A549 (cell line): ENCODE measurements at regions of chr2 and their contacts with region 1.

Region 1: GRCh38 chr2:217886720-217887309 is 116.0 kb downstream of the TNS1 start:
- DNase-seq: peak; percentile 76 to 81
- ATAC-seq: peak; percentile 80 to 89
- H3K4me3 ChIP-seq: no peak overlapping the region
- H3K27ac ChIP-seq: no peak overlapping the region
- H3K4me1 ChIP-seq: peaks cover 7% of the 10 kb centered on the region; the same call in 2 of the 3 replicates
- CTCF ChIP-seq: peak; percentile 77
- EP300 ChIP-seq: no peak
- POLR2A ChIP-seq: no peak
- RAD21 ChIP-seq: peak; percentile 71 to 81

Region 2: GRCh38 chr2:217585362-217585761 is 301.5 kb before region 1 on chr2:
- CTCF ChIA-PET with region 1: no interaction called
- POLR2A ChIA-PET with region 1: no interaction called
- DNase-seq: no peak
- ATAC-seq: no peak
- H3K4me3 ChIP-seq: no peak overlapping the region
- H3K27ac ChIP-seq: no peak overlapping the region
- H3K4me1 ChIP-seq: no peaks in the 10 kb centered on the region
- CTCF ChIP-seq: no peak
- EP300 ChIP-seq: no peak
- POLR2A ChIP-seq: no peak
- RAD21 ChIP-seq: no peak

Region 3: DNA sequence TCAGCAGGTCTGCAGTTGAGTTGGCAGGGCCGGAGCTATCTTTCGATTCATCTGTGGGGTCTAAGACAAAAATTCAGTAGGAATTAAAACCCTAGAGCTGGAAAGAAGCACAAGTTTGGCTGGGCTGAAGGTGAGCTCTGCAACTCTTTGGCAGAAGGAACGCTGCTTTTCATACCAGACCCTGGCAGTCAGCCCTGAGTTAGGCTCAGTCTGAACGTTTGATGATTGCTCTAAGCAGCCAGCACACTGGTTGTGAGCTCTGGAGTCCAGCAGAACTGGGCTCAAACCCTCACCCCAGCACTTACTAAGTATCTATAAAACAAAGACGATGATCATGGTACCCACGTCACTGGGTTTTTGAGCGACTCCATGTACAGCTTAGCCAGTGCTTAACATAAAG is 76.6 kb before region 1 on chr2:
- CTCF ChIA-PET with region 1: interaction called, 10 read pairs
- POLR2A ChIA-PET with region 1: no interaction called
- DNase-seq: no peak
- ATAC-seq: no peak
- H3K4me3 ChIP-seq: no peak overlapping the region
- H3K27ac ChIP-seq: no peak overlapping the region
- H3K4me1 ChIP-seq: no peaks in the 10 kb centered on the region
- CTCF ChIP-seq: no peak
- EP300 ChIP-seq: no peak
- POLR2A ChIP-seq: no peak
- RAD21 ChIP-seq: no peak

Region 4: DNA sequence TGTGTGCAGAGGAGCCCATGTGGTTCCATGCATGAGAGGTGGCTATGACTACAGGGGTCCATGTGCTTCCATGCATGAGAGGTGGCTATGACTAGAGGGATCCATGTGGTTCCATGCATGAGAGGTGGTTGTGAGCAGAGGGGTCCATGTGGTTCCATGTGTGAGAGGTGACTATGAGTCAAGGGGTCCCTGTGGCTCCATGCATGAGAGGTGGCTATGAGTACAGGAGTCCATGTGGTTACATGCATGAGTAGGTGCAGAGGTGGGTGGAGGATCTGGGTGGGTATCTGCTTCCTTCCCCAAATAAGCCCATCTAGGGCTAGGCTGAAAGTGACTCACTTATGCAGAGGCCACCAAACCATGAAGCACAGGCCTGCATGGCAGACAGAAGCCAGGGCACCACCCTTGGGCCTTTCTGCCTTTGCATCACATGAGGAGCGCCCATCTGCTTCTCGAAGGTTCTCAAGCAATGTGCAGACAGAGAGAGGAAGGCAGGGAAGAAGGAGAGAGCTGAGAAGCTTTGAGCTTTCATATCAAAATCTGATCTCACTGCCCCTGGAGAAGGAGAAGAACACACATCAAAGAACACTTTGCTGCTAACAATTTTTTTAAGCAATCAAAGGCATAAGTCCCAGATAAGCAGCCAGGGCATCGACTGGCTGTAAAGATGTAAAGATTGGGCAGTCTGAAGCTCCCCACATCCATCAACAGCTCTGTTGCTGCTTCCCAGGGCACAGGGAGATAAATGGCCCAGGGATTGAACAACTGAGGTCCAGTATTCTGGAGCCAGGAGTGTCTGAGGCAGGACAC is 21.6 kb before region 1 on chr2:
- CTCF ChIA-PET with region 1: interaction called, 67 read pairs
- POLR2A ChIA-PET with region 1: no interaction called
- DNase-seq: no peak
- ATAC-seq: no peak
- H3K4me3 ChIP-seq: no peak overlapping the region
- H3K27ac ChIP-seq: no peak overlapping the region
- H3K4me1 ChIP-seq: no peaks in the 10 kb centered on the region
- CTCF ChIP-seq: no peak
- EP300 ChIP-seq: no peak
- POLR2A ChIP-seq: no peak
- RAD21 ChIP-seq: no peak

Region 5: DNA sequence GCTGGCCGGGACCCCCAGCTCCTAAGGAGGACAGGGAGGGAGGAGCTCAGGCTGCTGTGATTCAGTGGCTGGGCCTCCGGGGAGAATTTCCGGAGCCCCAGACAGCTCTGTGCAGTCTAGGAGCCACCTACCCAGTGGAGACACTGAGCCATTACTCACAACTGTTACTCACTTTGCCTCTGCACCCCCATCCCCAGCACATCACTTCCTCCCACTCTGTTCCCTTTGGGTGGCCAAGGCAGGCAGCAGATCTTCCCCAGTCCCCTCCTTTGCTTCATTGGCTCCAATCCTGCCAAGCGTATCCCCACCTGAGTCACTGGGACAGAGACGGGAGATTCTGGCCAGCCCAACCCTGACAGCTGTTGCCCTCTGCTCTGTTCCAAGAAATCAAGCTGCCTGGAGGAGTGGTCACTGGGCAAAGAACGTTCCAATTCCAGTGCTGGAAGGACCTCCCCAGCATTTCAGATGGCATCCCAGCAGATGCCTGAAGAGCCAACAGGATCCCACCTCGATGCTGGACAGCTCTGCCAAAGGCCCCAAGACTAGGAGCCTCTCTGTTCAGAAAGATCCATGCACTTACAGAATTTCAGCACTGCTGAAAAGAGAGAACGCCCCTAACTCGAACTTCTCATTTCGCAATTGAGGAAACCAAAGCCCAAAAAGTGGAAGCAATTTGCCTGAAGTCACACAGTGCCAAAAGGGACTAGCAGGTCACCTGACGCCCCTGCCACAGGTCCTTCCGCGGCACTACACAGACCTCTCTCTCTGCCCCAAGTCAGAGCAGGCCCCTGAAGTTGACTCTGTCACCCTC is 47.7 kb after region 1 on chr2:
- CTCF ChIA-PET with region 1: interaction called, 18 read pairs
- POLR2A ChIA-PET with region 1: no interaction called
- DNase-seq: peak; percentile 55 to 73
- ATAC-seq: peak; percentile 90
- H3K4me3 ChIP-seq: no peak overlapping the region
- H3K27ac ChIP-seq: peak overlapping the region; percentile 88 to 90
- H3K4me1 ChIP-seq: peaks cover 78% of the 10 kb centered on the region
- CTCF ChIP-seq: no peak
- EP300 ChIP-seq: peak; percentile 44 to 74; a peak in 3 of 5 replicates
- POLR2A ChIP-seq: no peak
- RAD21 ChIP-seq: peak in 1 of 2 experiments; percentile 26; a peak in 1 of 5 replicates

Region 6: GRCh38 chr2:217988014-217988839 is 101.4 kb after region 1 on chr2:
- CTCF ChIA-PET with region 1: interaction called, 61 read pairs
- POLR2A ChIA-PET with region 1: no interaction called
- DNase-seq: peak; percentile 56 to 61
- ATAC-seq: peak; percentile 56 to 86; a peak in 5 of 6 replicates
- H3K4me3 ChIP-seq: no peak overlapping the region
- H3K27ac ChIP-seq: peak overlapping the region; percentile 55 to 71
- H3K4me1 ChIP-seq: peaks cover 24% of the 10 kb centered on the region
- CTCF ChIP-seq: peak; percentile 90
- EP300 ChIP-seq: no peak
- POLR2A ChIP-seq: no peak
- RAD21 ChIP-seq: peak; percentile 91 to 93

Region 7: DNA sequence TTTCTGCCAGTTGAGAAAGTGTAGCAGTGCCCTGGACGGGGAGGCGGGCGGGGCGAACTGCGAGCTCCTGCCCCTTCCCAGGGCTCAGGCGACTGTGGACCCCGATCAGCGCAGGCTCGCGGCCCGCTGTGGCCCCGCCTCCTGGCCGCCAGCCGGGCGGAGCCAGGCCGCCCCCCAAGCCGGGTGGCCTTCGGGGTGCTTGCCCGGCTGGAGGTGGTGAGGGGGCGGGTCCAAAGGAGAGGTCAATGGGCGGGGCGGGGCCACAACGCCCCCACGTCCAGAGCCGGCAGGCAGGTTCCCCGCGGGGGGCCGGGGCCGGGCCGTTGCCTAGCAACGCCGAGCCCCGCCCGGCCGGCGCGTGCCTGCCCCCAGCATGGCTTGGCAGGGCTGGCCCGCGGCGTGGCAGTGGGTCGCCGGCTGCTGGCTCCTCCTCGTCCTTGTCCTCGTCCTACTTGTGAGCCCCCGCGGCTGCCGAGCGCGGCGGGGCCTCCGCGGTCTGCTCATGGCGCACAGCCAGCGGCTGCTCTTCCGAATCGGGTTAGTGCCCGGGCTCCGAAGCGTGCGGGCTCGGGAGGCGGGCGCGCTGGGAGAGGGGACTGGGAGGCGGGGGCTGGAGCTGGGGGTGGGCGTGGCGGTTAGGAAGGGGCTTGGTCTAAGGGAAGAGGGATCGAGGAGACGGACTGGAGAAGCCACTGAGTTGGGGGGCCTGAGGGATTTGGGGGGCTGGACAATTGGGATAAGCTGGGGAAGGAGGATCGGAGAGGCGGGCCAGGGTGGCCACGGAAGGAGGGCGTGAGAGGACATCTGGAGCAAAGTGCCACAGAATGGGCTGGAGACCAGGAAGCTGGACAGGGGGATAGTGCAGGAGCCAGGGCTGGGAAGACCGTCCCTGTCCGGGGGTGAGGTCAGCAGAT is 436.3 kb after region 1 on chr2:
- CTCF ChIA-PET with region 1: no interaction called
- POLR2A ChIA-PET with region 1: no interaction called
- DNase-seq: peak; percentile 84 to 91
- ATAC-seq: peak; percentile 80 to 85
- H3K4me3 ChIP-seq: peak overlapping the region; percentile 82
- H3K27ac ChIP-seq: peak overlapping the region; percentile 93 to 98
- H3K4me1 ChIP-seq: peaks cover 32% of the 10 kb centered on the region
- CTCF ChIP-seq: no peak
- EP300 ChIP-seq: no peak
- POLR2A ChIP-seq: peak; percentile 55
- RAD21 ChIP-seq: no peak